Cardiac septum (tissue), 1 donor: ENCODE measurements at regions of chr3 and their contacts with region 1.

Region 1: GRCh38 chr3:32238453-32239306 is at the start of gene CMTM8:
- DNase-seq: peak; percentile 77
- total RNA-seq, gene CMTM8: 5.5 TPM

Region 2: DNA sequence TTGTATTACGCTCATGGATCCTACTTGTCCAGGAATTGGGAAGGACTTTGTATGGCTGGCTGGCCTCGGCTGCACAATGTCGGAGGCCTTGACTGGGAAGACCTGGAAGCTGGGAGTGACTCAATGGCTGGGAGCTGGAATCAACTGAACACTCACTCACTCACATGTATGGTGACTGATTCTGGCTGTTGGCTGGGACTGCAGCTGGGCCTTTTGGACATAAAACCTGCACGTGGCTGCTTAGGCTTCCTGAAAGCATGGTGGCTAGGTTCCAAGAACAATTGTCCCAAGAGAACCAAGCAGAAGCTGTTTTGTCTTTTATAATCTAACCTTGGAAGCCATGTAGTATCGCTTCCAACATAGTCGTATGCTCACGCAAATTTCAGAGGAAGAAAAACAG is 38.2 kb before region 1 on chr3:
- intact Hi-C with region 1: loop called (anchors 2 kb)
- DNase-seq: peak; percentile 79